ENCODE measurements at regions of chr7 and their contacts with region 1.

Region 1: DNA sequence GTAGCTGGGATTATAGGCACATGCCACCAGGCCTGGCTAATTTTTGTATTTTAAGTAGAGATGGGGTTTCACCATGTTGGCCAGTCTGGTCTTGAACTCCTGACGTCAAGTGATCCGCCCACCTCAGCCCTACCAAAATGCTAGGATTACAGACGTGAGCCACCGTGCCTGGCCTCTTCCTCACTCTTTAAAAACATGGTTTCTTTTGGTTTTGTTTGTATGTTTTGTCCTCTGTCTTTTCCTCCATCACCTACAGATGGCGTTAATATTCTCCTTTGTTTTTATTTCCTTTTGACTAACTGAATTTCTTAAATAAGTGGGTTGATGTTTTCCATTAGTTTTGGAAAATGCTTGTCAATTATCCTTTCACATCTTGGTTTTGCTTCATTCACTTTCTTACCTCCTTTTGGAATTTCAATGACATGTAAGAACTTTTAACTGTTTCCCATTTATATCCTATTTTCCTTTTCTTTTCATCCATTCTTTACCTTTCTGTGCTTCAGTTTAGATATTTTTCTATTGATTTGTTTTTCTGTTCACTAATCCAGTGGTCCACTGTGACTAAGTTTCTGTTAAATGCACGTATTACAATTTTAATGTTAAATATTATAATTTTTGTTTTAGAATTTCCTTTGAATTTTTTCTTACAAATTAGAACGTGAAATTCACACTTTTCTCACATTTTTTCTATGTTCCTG is 104.1 kb downstream of the ZNF467 start:
- DNase-seq: peak; percentile 51
- ATAC-seq: peak; percentile 83
- H3K4me3 ChIP-seq: no peak overlapping the region
- H3K27ac ChIP-seq: no peak overlapping the region
- H3K4me1 ChIP-seq: peaks cover 0 to 8% of the 10 kb centered on the region in 2 experiments; a peak in 1 of 4 replicates
- H3K27me3 ChIP-seq: no peaks in the 10 kb centered on the region
- CTCF ChIP-seq: peak; percentile 36 to 75 (median 56); a peak in 5 of 6 replicates
- POLR2A ChIP-seq: no peak
- RAD21 ChIP-seq: peak; percentile 64

Region 2: GRCh38 chr7:149690688-149691446 is 21.6 kb after region 1 on chr7:
- CTCF ChIA-PET with region 1: interaction called, 10 read pairs
- POLR2A ChIA-PET with region 1: no interaction called
- RAD21 ChIA-PET with region 1: no interaction called
- intact Hi-C with region 1: no loop called
- DNase-seq: peak; percentile 89
- ATAC-seq: peak; percentile 94
- H3K4me3 ChIP-seq: no peak overlapping the region
- H3K27ac ChIP-seq: peak overlapping the region; percentile 29; the same call in 1 of the 2 replicates
- H3K4me1 ChIP-seq: peaks cover 5 to 12% of the 10 kb centered on the region in 2 experiments
- H3K27me3 ChIP-seq: peaks cover under 1% of the 10 kb centered on the region; the same call in 1 of the 2 replicates
- CTCF ChIP-seq: no peak
- POLR2A ChIP-seq: no peak
- RAD21 ChIP-seq: no peak

Region 3: DNA sequence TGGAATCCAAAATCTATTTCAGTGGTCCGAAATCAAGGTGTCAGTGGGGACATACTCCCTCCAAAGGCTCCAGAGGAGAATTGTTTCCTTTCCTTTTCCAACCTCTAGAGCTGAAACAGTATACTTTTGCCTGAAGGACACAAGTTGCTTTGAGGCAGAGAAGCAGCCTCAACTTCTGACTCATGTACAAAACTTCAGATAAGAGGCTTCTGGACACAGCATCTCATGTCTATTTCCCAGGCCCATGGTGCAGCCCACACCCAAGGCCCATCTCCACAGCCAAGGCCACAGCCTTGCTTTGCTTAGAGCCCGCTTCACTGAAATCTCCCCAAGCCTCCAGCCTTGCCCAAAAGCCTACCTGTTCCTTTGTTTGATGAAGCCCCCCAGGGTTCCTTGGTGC is 35.2 kb after region 1 on chr7:
- CTCF ChIA-PET with region 1: interaction called, 10 read pairs
- POLR2A ChIA-PET with region 1: no interaction called
- RAD21 ChIA-PET with region 1: no interaction called
- intact Hi-C with region 1: loop called (anchors 5 kb)
- DNase-seq: no peak
- ATAC-seq: no peak
- H3K4me3 ChIP-seq: no peak overlapping the region
- H3K27ac ChIP-seq: no peak overlapping the region
- H3K4me1 ChIP-seq: no peaks in the 10 kb centered on the region
- H3K27me3 ChIP-seq: no peaks in the 10 kb centered on the region
- CTCF ChIP-seq: no peak
- POLR2A ChIP-seq: no peak
- RAD21 ChIP-seq: no peak

Region 4: GRCh38 chr7:149742075-149742701 is 72.9 kb after region 1 on chr7:
- CTCF ChIA-PET with region 1: interaction called, 8 read pairs
- POLR2A ChIA-PET with region 1: no interaction called
- RAD21 ChIA-PET with region 1: no interaction called
- intact Hi-C with region 1: loop called (anchors 1 kb)
- DNase-seq: peak; percentile 47
- ATAC-seq: peak; percentile 95
- H3K4me3 ChIP-seq: peak overlapping the region; percentile 51 to 57
- H3K27ac ChIP-seq: no peak overlapping the region
- H3K4me1 ChIP-seq: peaks cover 5 to 13% of the 10 kb centered on the region in 2 experiments; a peak in 3 of 4 replicates
- H3K27me3 ChIP-seq: no peaks in the 10 kb centered on the region
- CTCF ChIP-seq: peak; percentile 88 to 92 (median 92)
- POLR2A ChIP-seq: no peak
- RAD21 ChIP-seq: peak; percentile 89

Measured in HCT116 (cell line).